Activated CD4-positive, alpha-beta T cell treated with anti-CD3 and anti-CD28 coated beads, Interleukin-2, amount 10 ng/mL, durations not matched to agents 24 days and 14 days (primary cell): ENCODE measurements at regions of chr1 and their contacts with region 1.

Region 1: DNA sequence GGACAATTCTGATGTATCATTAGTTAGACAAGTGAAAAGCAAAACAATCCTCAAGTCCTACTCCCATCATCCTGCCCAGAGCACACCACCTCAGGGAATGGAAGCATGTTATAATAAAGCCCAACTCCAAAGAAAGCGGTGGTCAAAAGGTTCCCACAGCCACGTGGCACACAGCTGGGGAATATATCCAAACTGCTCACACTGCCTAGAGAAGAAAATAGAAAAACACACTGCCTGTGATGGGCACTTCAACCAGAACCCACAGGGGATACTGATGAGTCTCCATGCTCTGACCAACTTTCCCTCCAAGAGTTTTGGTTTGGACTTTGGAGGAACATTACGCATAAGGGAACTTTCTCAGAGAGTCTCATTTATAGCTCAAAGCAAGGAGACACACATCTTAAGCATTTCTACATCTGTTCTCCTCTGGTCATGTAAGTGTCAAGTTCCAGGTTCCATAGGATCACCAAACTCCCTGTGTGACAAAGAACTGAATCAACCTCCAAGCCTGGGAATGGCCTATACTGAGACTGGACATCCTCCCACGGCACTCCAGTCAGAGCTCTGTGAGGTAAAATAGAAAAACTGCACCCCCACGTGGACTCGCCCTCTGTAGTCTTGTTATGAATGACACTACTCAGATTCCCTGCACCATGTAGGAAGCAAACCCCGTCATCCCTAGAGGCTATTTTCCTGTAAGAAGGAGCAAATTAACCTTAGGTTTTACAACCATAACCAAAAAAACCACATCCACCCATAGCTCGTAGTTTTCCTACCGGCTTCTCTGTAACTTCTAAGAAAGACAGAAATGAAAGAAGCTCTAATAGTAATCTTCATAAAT is 12.2 kb downstream of the DSTYK start:
- DNase-seq: peak; percentile 78
- H3K4me3 Mint-ChIP-seq: peak overlapping the region; percentile 66
- H3K27ac Mint-ChIP-seq: peak overlapping the region; percentile 85
- H3K4me1 Mint-ChIP-seq: peaks cover 50% of the 10 kb centered on the region
- H3K27me3 Mint-ChIP-seq: no peaks in the 10 kb centered on the region

Region 2: GRCh38 chr1:205172729-205173366 is 26.5 kb before region 1 on chr1:
- intact Hi-C with region 1: loop called (anchors 1 kb)
- DNase-seq: no peak
- H3K4me3 Mint-ChIP-seq: peak overlapping the region; percentile 54
- H3K27ac Mint-ChIP-seq: peak overlapping the region; percentile 79
- H3K4me1 Mint-ChIP-seq: peaks cover 17% of the 10 kb centered on the region
- H3K27me3 Mint-ChIP-seq: no peaks in the 10 kb centered on the region